Right ventricle myocardium superior (tissue), 1 donor: ENCODE measurements at regions of chr12 and their contacts with region 1.

Region 1: GRCh38 chr12:113912760-113913329 is 53.3 kb downstream of the RBM19 start:
- DNase-seq: peak; percentile 72
- ATAC-seq: peak; percentile 74

Region 2: GRCh38 chr12:113310489-113310888 is 602.4 kb before region 1 on chr12:
- intact Hi-C with region 1: loop called (anchors 10 kb)
- DNase-seq: no peak
- ATAC-seq: no peak

Region 3: GRCh38 chr12:113462117-113462774 is 450.6 kb before region 1 on chr12:
- intact Hi-C with region 1: loop called (anchors 2 kb)
- DNase-seq: peak; percentile 90
- ATAC-seq: peak; percentile 95

Region 4: GRCh38 chr12:114054982-114055381 is 142.1 kb after region 1 on chr12:
- intact Hi-C with region 1: no loop called
- DNase-seq: no peak
- ATAC-seq: no peak